ENCODE measurements at regions of chr7 and their contacts with region 1.

Region 1: DNA sequence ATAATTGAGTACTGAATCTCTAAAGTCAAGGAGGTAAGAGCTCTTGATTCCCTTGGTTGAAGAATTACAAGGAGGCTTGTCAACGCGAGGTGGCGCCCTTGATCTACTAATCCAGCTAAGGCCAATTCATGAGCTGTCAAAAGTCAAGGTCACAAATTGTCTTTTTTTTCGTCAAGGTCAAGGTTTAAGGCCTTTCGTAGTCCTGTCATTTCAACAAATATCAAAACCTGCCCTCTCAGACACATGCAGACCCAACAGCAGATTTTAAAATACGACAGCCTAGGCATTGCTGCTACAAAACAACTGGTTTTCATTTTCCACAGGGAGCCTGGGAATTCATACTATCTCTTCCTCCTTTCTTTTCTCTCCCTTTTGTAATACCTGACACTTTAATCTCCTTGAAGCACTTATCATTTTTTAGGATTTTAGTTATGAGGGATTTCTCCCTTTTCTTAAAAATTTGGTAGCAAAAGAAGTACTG is 3.6 kb downstream of the HOXA13 start:
- DNase-seq: no peak
- ATAC-seq: no peak
- H3K4me3 ChIP-seq: no peak overlapping the region
- H3K27ac ChIP-seq: no peak overlapping the region
- H3K4me1 ChIP-seq: peaks cover 0 to 21% of the 10 kb centered on the region in 2 experiments; a peak in 3 of 4 replicates
- H3K27me3 ChIP-seq: no peaks in the 10 kb centered on the region
- CTCF ChIP-seq: peak; percentile 62 to 87 (median 79)
- POLR2A ChIP-seq: no peak
- RAD21 ChIP-seq: peak; percentile 92

Region 2: DNA sequence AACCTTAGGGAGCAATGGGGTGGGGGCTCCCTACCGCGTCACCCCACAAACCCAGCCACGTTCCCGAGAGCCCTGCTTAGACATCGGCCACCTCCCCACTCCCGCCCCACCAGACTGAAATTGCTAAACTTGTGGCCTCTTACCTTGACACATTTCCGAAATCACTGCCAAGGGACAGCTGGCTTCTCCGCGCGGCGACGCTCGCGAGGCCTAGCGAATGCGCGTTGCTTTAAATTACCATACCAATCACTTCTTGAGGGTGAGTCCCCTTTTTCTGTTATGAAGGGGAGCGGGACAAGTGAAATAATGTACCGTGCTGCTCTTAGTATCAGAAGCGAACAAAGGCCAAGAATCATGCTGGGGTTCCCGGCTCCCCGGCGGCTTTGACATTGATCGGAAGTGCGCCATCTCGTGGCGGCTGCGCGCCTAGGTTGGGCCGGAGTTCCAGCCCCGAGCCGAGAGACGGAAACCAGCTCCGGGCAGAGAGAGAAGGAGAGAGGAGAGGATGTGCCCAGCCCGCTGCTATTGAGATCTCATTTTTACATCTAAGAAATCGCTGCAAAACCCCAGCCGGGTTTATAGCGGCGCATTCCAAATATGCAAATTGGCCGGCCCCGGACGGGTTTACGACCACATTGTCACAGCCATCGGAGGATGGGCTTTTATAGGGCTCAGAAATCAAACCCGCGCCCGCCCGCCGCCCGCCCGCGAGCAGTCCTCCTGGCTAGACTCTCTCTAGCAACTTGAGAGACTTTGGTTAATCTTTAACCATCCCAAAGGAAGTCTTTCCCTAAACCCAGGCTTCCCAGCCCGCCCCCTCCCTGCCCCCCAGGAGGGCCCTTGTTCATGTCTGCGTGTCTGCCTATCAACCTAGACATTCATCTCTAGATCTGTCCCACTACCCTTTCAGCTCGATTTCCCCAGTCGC is 16.6 kb before region 1 on chr7:
- CTCF ChIA-PET with region 1: interaction called, 11 read pairs
- POLR2A ChIA-PET with region 1: interaction called, 3 read pairs
- RAD21 ChIA-PET with region 1: interaction called in 1 of 2 experiments, 7 read pairs
- intact Hi-C with region 1: no loop called
- DNase-seq: no peak
- ATAC-seq: peak; percentile 79
- H3K4me3 ChIP-seq: peak overlapping the region; percentile 43 to 56
- H3K27ac ChIP-seq: peak overlapping the region; percentile 38; the same call in 1 of the 2 replicates
- H3K4me1 ChIP-seq: peaks cover 30 to 51% of the 10 kb centered on the region in 2 experiments
- H3K27me3 ChIP-seq: no peaks in the 10 kb centered on the region
- CTCF ChIP-seq: peak; percentile 80 to 97 (median 93)
- POLR2A ChIP-seq: no peak
- RAD21 ChIP-seq: no peak; the same call in 1 of the 2 replicates

Region 3: GRCh38 chr7:27605689-27606269 is 409.5 kb after region 1 on chr7:
- CTCF ChIA-PET with region 1: interaction called, 38 read pairs
- POLR2A ChIA-PET with region 1: no interaction called
- RAD21 ChIA-PET with region 1: interaction called in 1 of 2 experiments, 5 read pairs
- intact Hi-C with region 1: loop called (anchors 2 kb)
- DNase-seq: no peak
- ATAC-seq: no peak
- H3K4me3 ChIP-seq: no peak overlapping the region
- H3K27ac ChIP-seq: no peak overlapping the region
- H3K4me1 ChIP-seq: 0 out of 4 replicates have a peak, but pooled peaks cover 0 to 3% of the 10 kb centered on the region in 2 experiments
- H3K27me3 ChIP-seq: no peaks in the 10 kb centered on the region
- CTCF ChIP-seq: peak; percentile 40 to 51 (median 48); a peak in 4 of 6 replicates
- POLR2A ChIP-seq: no peak
- RAD21 ChIP-seq: peak; percentile 48

Region 4: GRCh38 chr7:27745064-27745583 is 548.8 kb after region 1 on chr7:
- CTCF ChIA-PET with region 1: interaction called, 10 read pairs
- POLR2A ChIA-PET with region 1: no interaction called
- RAD21 ChIA-PET with region 1: interaction called, 3 to 6 read pairs
- intact Hi-C with region 1: loop called (anchors 10 kb)
- DNase-seq: peak; percentile 48
- ATAC-seq: peak; percentile 55
- H3K4me3 ChIP-seq: no peak overlapping the region
- H3K27ac ChIP-seq: peak overlapping the region; percentile 46; the same call in 1 of the 2 replicates
- H3K4me1 ChIP-seq: peaks cover 13 to 20% of the 10 kb centered on the region in 2 experiments
- H3K27me3 ChIP-seq: no peaks in the 10 kb centered on the region
- CTCF ChIP-seq: peak; percentile 68 to 71 (median 68)
- POLR2A ChIP-seq: no peak
- RAD21 ChIP-seq: peak; percentile 76

Region 5: GRCh38 chr7:27921081-27921836 is 724.9 kb after region 1 on chr7:
- CTCF ChIA-PET with region 1: interaction called, 49 read pairs
- POLR2A ChIA-PET with region 1: no interaction called
- RAD21 ChIA-PET with region 1: interaction called, 4 read pairs
- intact Hi-C with region 1: loop called (anchors 1 kb)
- DNase-seq: peak; percentile 71
- ATAC-seq: peak; percentile 84
- H3K4me3 ChIP-seq: no peak overlapping the region
- H3K27ac ChIP-seq: no peak overlapping the region
- H3K4me1 ChIP-seq: peaks cover 6 to 34% of the 10 kb centered on the region in 2 experiments; a peak in 2 of 4 replicates
- H3K27me3 ChIP-seq: no peaks in the 10 kb centered on the region
- CTCF ChIP-seq: peak; percentile 46 to 76 (median 69); a peak in 4 of 6 replicates
- POLR2A ChIP-seq: no peak
- RAD21 ChIP-seq: peak; percentile 88

Region 6: DNA sequence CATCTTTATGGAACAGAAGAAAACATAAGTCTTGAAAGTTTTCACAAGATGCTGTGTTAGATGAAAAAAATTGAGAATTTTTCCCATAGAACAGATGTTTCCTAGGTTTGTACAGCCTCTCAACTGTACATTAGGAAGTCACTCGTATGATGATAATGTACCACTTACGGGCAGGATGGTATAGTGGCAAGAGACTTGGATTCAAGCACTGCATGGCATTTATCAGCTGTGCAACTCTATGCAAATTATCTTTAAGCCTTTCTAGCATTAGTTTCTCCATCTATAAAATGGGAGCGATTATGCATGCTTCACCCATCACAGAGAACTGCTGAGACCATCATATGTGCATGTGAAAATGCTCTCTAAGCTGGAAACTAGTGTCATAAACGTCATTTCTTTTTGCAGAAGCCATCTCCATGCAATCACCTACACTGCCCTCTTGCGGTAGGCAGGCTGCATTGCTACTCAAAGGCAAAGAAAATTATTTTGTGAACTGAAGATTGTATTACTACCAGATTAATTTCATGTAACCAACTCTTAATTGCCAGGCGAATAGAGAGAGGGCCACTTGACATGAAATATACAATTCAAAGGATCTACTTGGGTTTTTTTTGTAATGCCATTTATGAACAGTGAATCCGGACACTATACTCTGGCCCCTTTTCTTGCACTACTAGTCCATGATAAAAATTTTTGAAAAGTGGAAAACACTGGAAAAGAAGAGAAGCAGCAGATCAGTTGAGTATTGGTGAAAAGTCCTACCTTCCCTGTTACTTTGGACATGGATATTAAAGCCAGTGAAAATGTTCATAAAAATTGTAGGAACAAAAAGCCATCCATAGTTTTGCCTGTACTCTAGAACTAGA is 881.9 kb after region 1 on chr7:
- CTCF ChIA-PET with region 1: interaction called, 3 read pairs
- POLR2A ChIA-PET with region 1: no interaction called
- RAD21 ChIA-PET with region 1: no interaction called
- intact Hi-C with region 1: loop called (anchors 1 kb)
- DNase-seq: peak; percentile 16
- ATAC-seq: peak; percentile 55
- H3K4me3 ChIP-seq: no peak overlapping the region
- H3K27ac ChIP-seq: no peak overlapping the region
- H3K4me1 ChIP-seq: no peaks in the 10 kb centered on the region
- H3K27me3 ChIP-seq: no peaks in the 10 kb centered on the region
- CTCF ChIP-seq: peak; percentile 49 to 99 (median 98); a peak in 5 of 6 replicates
- POLR2A ChIP-seq: no peak
- RAD21 ChIP-seq: peak; percentile 65

Region 7: GRCh38 chr7:28626624-28627262 is 1430.4 kb after region 1 on chr7:
- CTCF ChIA-PET with region 1: no interaction called
- POLR2A ChIA-PET with region 1: no interaction called
- RAD21 ChIA-PET with region 1: no interaction called
- intact Hi-C with region 1: loop called (anchors 10 kb)
- DNase-seq: peak; percentile 40
- ATAC-seq: peak; percentile 80
- H3K4me3 ChIP-seq: no peak overlapping the region
- H3K27ac ChIP-seq: no peak overlapping the region
- H3K4me1 ChIP-seq: peaks cover 3 to 4% of the 10 kb centered on the region in 2 experiments; a peak in 2 of 4 replicates
- H3K27me3 ChIP-seq: peaks cover 23% of the 10 kb centered on the region
- CTCF ChIP-seq: peak; percentile 48 to 79 (median 77); a peak in 5 of 6 replicates
- POLR2A ChIP-seq: no peak
- RAD21 ChIP-seq: peak; percentile 54

Measured in HCT116 (cell line).